ENCODE measurements at regions of chr1 and their contacts with region 1.

Region 1: GRCh38 chr1:173867753-173868265 is at the start of gene GAS5:
- DNase-seq: peak; percentile 96 to 100
- H3K4me3 ChIP-seq: peak within 1 kb of the TSS; percentile 90 to 100 (median 92)
- H3K27ac ChIP-seq: peak within 1 kb of the TSS; percentile 93
- H3K4me1 ChIP-seq: peaks cover 2 to 10% (median 4%) of the 10 kb centered on the region in 4 experiments; a peak in 5 of 7 replicates
- H3K27me3 ChIP-seq: no peaks in the 10 kb centered on the region
- CTCF ChIP-seq: no peak
- EP300 ChIP-seq: no peak
- POLR2A ChIP-seq: peak; percentile 99 to 100
- RAD21 ChIP-seq: no peak
- total RNA-seq, gene GAS5: 763 and 799 TPM in 2 replicates

Region 2: GRCh38 chr1:173639102-173639501 is 228.7 kb before region 1 on chr1:
- CTCF ChIA-PET with region 1: no interaction called
- POLR2A ChIA-PET with region 1: interaction called, 23 read pairs
- DNase-seq: no peak
- H3K4me3 ChIP-seq: peak overlapping the region; percentile 11 to 61 (median 36); a peak in 6 of 8 replicates
- H3K27ac ChIP-seq: peak overlapping the region; percentile 17; the same call in 1 of the 2 replicates
- H3K4me1 ChIP-seq: peaks cover 0 to 2% (median under 1%) of the 10 kb centered on the region in 4 experiments; a peak in 4 of 7 replicates
- H3K27me3 ChIP-seq: no peaks in the 10 kb centered on the region
- CTCF ChIP-seq: no peak
- EP300 ChIP-seq: no peak
- POLR2A ChIP-seq: peak; percentile 56 to 87
- RAD21 ChIP-seq: no peak

Region 3: DNA sequence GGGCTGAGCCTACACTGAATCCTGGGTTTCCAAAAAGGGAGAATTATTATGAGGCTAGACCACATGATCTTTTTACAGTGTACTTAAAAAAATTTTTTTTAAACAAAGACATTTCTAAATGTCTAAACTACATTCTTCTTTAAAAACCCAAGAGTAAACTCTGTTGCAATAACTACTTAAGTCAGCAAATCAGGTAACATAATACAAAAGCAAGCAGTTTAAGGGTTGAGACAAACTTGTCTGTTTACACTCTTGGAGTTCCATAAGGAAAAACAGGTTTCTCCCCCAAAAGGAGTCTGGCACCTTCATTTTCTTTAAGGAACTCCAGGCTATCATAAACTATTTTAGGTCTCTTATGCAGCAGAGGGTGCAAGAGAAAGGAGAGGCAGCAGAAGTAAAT is 185.6 kb before region 1 on chr1:
- CTCF ChIA-PET with region 1: no interaction called
- POLR2A ChIA-PET with region 1: no interaction called
- DNase-seq: no peak
- H3K4me3 ChIP-seq: peak overlapping the region in 1 of 4 experiments; percentile 14; a peak in 1 of 8 replicates
- H3K27ac ChIP-seq: 0 out of 2 replicates have a peak overlapping the region, but pooled peaks have one; percentile 5
- H3K4me1 ChIP-seq: peaks cover 0 to 4% (median 0%) of the 10 kb centered on the region in 4 experiments; a peak in 3 of 7 replicates
- H3K27me3 ChIP-seq: no peaks in the 10 kb centered on the region
- CTCF ChIP-seq: no peak
- EP300 ChIP-seq: no peak
- POLR2A ChIP-seq: no peak
- RAD21 ChIP-seq: no peak

Region 4: GRCh38 chr1:173824331-173825081 is 43.3 kb before region 1 on chr1 and contains the starts of genes CENPL and DARS2:
- CTCF ChIA-PET with region 1: no interaction called
- POLR2A ChIA-PET with region 1: interaction called, 166 read pairs
- DNase-seq: peak; percentile 88 to 89
- H3K4me3 ChIP-seq: peak within 1 kb of the TSS; percentile 69 to 96 (median 88)
- H3K27ac ChIP-seq: peak within 1 kb of the TSS; percentile 94
- H3K4me1 ChIP-seq: no peaks in the 10 kb centered on the region; a peak in 3 of 7 replicates
- H3K27me3 ChIP-seq: no peaks in the 10 kb centered on the region
- CTCF ChIP-seq: no peak
- EP300 ChIP-seq: no peak
- POLR2A ChIP-seq: peak; percentile 63 to 85
- RAD21 ChIP-seq: no peak
- total RNA-seq, gene CENPL: 16.0 and 16.3 TPM in 2 replicates
- total RNA-seq, gene DARS2: 35.2 and 35.7 TPM in 2 replicates

Region 5: DNA sequence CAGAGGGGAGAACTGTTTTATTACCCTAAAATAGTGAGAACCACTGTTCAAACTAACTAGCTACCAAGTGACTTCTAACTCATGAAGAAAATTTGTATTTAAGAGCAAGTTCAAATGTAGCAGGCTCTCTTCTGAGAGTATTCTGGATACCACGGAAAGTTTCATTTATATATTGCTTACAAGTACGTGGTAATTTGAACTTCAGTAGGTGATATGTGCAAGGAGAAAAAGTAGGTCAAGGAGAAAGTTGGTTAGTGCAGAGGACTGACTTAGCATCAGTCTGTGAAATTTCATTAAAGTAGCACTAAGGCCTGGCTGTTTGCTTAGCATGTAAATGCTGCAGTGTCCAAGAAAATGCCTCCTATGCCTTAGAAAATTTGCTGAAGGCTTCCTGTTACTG is 32.6 kb after region 1 on chr1:
- CTCF ChIA-PET with region 1: interaction called, 3 read pairs
- POLR2A ChIA-PET with region 1: interaction called, 17 read pairs
- DNase-seq: no peak
- H3K4me3 ChIP-seq: no peak overlapping the region
- H3K27ac ChIP-seq: no peak overlapping the region
- H3K4me1 ChIP-seq: peaks cover 0 to 14% (median 2%) of the 10 kb centered on the region in 4 experiments; a peak in 4 of 7 replicates
- H3K27me3 ChIP-seq: no peaks in the 10 kb centered on the region
- CTCF ChIP-seq: no peak
- EP300 ChIP-seq: no peak
- POLR2A ChIP-seq: no peak
- RAD21 ChIP-seq: no peak

Region 6: GRCh38 chr1:173934440-173934839 is 66.6 kb after region 1 on chr1:
- CTCF ChIA-PET with region 1: no interaction called
- POLR2A ChIA-PET with region 1: interaction called, 19 read pairs
- DNase-seq: no peak
- H3K4me3 ChIP-seq: peak overlapping the region in 1 of 4 experiments; percentile 1; a peak in 1 of 8 replicates
- H3K27ac ChIP-seq: no peak overlapping the region
- H3K4me1 ChIP-seq: peaks cover 0 to 3% (median 1%) of the 10 kb centered on the region in 4 experiments; a peak in 3 of 7 replicates
- H3K27me3 ChIP-seq: no peaks in the 10 kb centered on the region
- CTCF ChIP-seq: no peak
- EP300 ChIP-seq: no peak
- POLR2A ChIP-seq: no peak
- RAD21 ChIP-seq: no peak

Region 7: GRCh38 chr1:174022080-174022975 is 154.5 kb after region 1 on chr1 and contains the start of gene RC3H1:
- CTCF ChIA-PET with region 1: no interaction called
- POLR2A ChIA-PET with region 1: interaction called, 43 read pairs
- DNase-seq: peak; percentile 74 to 86
- H3K4me3 ChIP-seq: peak within 1 kb of the TSS; percentile 77 to 92 (median 88)
- H3K27ac ChIP-seq: peak within 1 kb of the TSS; percentile 92
- H3K4me1 ChIP-seq: peaks cover 0 to 6% (median 2%) of the 10 kb centered on the region in 4 experiments; a peak in 5 of 7 replicates
- H3K27me3 ChIP-seq: no peaks in the 10 kb centered on the region
- CTCF ChIP-seq: no peak
- EP300 ChIP-seq: no peak
- POLR2A ChIP-seq: peak; percentile 84 to 85
- RAD21 ChIP-seq: no peak
- total RNA-seq, gene RC3H1: 29.5 and 32.2 TPM in 2 replicates

Measured in H1 (cell line).